ENCODE measurements at regions of chr3 and their contacts with region 1.

Region 1: DNA sequence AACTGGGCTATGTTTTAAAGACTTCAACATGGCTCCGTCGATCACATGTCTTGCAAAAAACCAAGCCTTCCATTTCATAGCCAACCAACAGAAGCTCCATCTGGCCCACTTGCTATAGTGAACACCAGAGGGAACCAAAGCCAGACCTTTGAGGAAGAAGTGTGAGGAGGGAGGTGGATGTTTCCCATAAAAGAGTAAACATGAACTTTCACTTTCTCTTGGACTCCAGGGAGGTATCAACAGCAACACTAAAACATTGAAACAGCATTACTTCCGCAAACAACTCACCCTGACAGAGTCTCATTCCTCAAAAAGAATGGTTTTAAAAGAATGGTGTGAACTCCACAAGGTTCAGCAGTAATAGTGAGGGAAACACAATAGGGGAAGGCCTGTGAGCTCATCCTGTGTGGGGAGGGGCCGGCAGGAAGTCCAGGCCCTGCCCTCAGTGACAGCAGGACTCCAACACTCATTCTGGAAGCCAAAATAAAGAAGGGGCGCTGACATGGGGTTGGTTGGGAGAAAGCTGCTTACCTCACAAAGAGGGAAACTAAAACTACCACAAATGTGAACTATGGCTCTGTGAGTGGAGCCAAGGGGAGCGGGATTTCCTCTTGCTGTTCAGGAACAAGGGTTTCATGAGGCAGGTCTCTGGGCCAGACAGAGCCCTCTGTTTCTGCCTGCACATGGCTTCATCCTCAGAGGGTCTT is 59.0 kb upstream of the IL12A start:
- DNase-seq: peak; percentile 87
- ATAC-seq: peak; percentile 41
- H3K4me3 ChIP-seq: no peak overlapping the region
- H3K27ac ChIP-seq: peak overlapping the region; percentile 93
- H3K4me1 ChIP-seq: peaks cover 24% of the 10 kb centered on the region
- H3K27me3 ChIP-seq: no peaks in the 10 kb centered on the region
- CTCF ChIP-seq: peak; percentile 67
- POLR2A ChIP-seq: no peak
- RAD21 ChIP-seq: peak; percentile 72

Region 2: GRCh38 chr3:159950156-159950898 is 20.7 kb after region 1 on chr3:
- CTCF ChIA-PET with region 1: no interaction called
- POLR2A ChIA-PET with region 1: no interaction called
- dilution Hi-C with region 1: no loop called
- in situ Hi-C with region 1: no loop called
- intact Hi-C with region 1: no loop called
- DNase-seq: no peak
- ATAC-seq: no peak
- H3K4me3 ChIP-seq: no peak overlapping the region
- H3K27ac ChIP-seq: no peak overlapping the region
- H3K4me1 ChIP-seq: peaks cover 5% of the 10 kb centered on the region
- H3K27me3 ChIP-seq: no peaks in the 10 kb centered on the region
- CTCF ChIP-seq: no peak
- POLR2A ChIP-seq: no peak
- RAD21 ChIP-seq: no peak

Region 3: GRCh38 chr3:159964166-159964973 is 34.8 kb after region 1 on chr3:
- CTCF ChIA-PET with region 1: no interaction called
- POLR2A ChIA-PET with region 1: interaction called, 3 read pairs
- dilution Hi-C with region 1: no loop called
- in situ Hi-C with region 1: no loop called
- intact Hi-C with region 1: loop called (anchors 1 kb)
- DNase-seq: peak; percentile 94
- ATAC-seq: peak; percentile 97
- H3K4me3 ChIP-seq: no peak overlapping the region
- H3K27ac ChIP-seq: peak overlapping the region; percentile 80
- H3K4me1 ChIP-seq: peaks cover 6% of the 10 kb centered on the region; the same call in 1 of the 2 replicates
- H3K27me3 ChIP-seq: no peaks in the 10 kb centered on the region
- CTCF ChIP-seq: no peak
- POLR2A ChIP-seq: no peak
- RAD21 ChIP-seq: no peak

Region 4: DNA sequence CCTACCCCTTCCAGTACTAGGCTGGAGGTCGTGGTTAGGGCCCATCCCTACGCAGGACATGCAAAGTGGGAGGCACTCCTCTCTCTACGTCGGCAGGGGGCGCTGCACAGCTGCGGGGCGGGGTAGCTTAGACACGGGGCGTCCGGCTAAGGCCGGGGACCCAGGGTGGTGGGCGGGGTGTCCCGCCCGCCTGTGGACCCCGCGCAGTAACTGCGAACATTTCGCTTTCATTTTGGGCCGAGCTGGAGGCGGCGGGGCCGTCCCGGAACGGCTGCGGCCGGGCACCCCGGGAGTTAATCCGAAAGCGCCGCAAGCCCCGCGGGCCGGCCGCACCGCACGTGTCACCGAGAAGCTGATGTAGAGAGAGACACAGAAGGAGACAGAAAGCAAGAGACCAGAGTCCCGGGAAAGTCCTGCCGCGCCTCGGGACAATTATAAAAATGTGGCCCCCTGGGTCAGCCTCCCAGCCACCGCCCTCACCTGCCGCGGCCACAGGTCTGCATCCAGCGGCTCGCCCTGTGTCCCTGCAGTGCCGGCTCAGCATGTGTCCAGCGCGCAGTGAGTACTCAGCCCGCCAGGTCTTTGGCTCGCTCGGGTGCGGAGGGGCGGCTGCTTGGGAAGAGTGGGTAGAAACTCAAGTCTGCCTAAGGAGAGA is 59.2 kb after region 1 on chr3 and contains the start of gene IL12A:
- CTCF ChIA-PET with region 1: interaction called, 17 read pairs
- POLR2A ChIA-PET with region 1: no interaction called
- dilution Hi-C with region 1: no loop called
- in situ Hi-C with region 1: no loop called
- intact Hi-C with region 1: loop called (anchors 1 kb)
- DNase-seq: peak; percentile 71
- ATAC-seq: peak; percentile 96
- H3K4me3 ChIP-seq: peak within 1 kb of the TSS; percentile 50
- H3K27ac ChIP-seq: peak within 1 kb of the TSS; percentile 5
- H3K4me1 ChIP-seq: peaks cover 11% of the 10 kb centered on the region
- H3K27me3 ChIP-seq: no peaks in the 10 kb centered on the region
- CTCF ChIP-seq: peak; percentile 81
- POLR2A ChIP-seq: no peak
- RAD21 ChIP-seq: peak; percentile 61
- total RNA-seq, gene IL12A: 0.90 and 1.1 TPM in 2 replicates

Region 5: DNA sequence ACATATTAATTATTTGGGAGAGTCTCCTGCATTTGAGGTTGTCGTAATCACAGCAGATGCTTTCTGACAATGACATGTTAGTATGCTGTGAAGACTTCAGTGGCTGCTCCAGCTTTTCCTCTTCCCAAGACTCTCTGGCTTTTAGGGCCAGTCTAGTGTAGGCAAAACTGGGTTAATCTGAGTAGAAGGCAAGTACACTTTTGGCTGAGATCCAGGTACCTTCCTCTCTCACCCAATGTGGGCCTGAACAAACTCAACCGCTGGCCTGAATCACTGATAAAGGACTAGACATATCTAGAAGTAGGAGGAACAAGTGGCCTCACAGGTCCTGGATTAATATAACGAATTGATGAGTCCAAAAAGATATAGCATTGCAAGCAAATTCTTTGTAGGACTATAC is 1438.0 kb after region 1 on chr3:
- CTCF ChIA-PET with region 1: no interaction called
- POLR2A ChIA-PET with region 1: no interaction called
- dilution Hi-C with region 1: no loop called
- in situ Hi-C with region 1: no loop called
- intact Hi-C with region 1: no loop called
- DNase-seq: no peak
- ATAC-seq: no peak
- H3K4me3 ChIP-seq: no peak overlapping the region
- H3K27ac ChIP-seq: no peak overlapping the region
- H3K4me1 ChIP-seq: no peaks in the 10 kb centered on the region
- H3K27me3 ChIP-seq: peaks cover 20% of the 10 kb centered on the region
- CTCF ChIP-seq: no peak
- POLR2A ChIP-seq: no peak
- RAD21 ChIP-seq: no peak